Activated T-helper 2 cell treated with anti-CD3 and anti-CD28 coated beads, Interferon-gamma antibody, Interleukin-2, Interleukin-4, amounts not matched to agents 10 μg/mL and 5 μg/mL and 100 μg/mL, durations not matched to agents 14 hours and 24 hours and 36 hours (primary cell): ENCODE measurements at regions of chr2 and their contacts with region 1.

Region 1: GRCh38 chr2:42494355-42495233 is 812 bp upstream of the KCNG3 start:
- DNase-seq: peak; percentile 70
- H3K4me3 Mint-ChIP-seq: peak overlapping the region; percentile 89
- H3K27ac Mint-ChIP-seq: peak overlapping the region; percentile 72
- H3K4me1 Mint-ChIP-seq: peaks cover 8% of the 10 kb centered on the region
- H3K27me3 Mint-ChIP-seq: peaks cover 34% of the 10 kb centered on the region

Region 2: DNA sequence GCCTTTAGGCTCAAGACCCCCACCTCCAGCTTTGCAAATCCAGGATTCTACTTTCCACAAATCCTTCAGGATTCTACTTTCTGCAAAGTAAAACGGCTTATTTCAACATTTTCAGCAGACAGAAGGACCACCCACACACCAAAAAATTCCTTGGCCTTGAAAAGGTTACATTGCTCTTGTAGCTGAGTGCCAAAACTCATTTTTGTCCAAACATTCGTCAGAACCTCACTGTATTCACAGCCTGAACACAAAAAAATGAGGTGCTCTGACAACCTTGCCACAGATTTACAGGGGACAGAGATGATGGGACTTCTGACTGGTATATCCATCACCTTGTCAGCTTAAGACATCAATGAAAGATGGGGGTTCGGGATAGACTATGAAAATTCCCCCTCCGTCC is 70.6 kb before region 1 on chr2:
- intact Hi-C with region 1: loop called (anchors 1 kb)
- DNase-seq: no peak
- H3K4me3 Mint-ChIP-seq: no peak overlapping the region
- H3K27ac Mint-ChIP-seq: no peak overlapping the region
- H3K4me1 Mint-ChIP-seq: peaks cover 28% of the 10 kb centered on the region
- H3K27me3 Mint-ChIP-seq: peaks cover 1% of the 10 kb centered on the region

Region 3: DNA sequence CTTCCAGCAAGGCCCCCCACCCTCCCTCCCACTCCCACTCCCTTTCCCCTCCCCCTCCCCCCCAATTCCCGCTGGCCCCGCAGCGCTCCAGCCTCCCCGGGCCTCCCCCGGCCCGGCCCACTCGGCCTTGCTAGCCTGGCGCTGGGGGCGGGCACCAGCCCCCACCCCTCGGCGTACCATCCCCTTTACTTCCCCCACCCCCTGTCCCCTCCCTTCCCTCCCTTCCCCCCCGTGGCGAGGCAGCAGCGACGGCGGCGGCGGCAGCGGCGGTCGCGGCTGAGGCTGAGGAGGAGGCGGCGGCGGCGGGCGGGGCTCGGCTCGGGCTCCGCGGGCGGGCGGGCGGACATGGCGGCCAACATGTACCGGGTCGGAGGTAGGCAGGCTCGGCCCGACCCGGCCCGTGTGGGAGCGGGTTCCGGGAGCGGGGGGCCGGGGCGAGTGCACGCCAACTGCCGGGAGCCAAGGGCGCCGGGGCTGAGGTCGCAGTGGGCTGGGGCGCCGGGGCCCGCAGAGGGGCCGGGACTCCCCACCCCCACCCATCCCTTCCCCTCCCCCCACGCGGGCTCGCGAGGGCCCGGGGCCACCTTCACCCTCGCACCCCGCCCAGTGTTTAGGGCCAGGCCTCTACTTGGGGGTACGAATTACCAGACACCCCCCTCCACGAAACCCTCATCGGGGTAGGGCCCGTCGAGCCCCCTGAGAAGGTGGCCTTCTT is 74.0 kb after region 1 on chr2 and contains the start of gene MTA3:
- intact Hi-C with region 1: loop called (anchors 2 kb)
- DNase-seq: peak; percentile 61
- H3K4me3 Mint-ChIP-seq: peak within 1 kb of the TSS; percentile 98
- H3K27ac Mint-ChIP-seq: peak within 1 kb of the TSS; percentile 98
- H3K4me1 Mint-ChIP-seq: peaks cover 22% of the 10 kb centered on the region
- H3K27me3 Mint-ChIP-seq: no peaks in the 10 kb centered on the region
- total RNA-seq, gene MTA3: 39.7 and 39.8 TPM in 2 replicates

Region 4: GRCh38 chr2:42663106-42663780 is 168.6 kb after region 1 on chr2:
- intact Hi-C with region 1: loop called (anchors 1 kb)
- DNase-seq: peak; percentile 39
- H3K4me3 Mint-ChIP-seq: no peak overlapping the region
- H3K27ac Mint-ChIP-seq: no peak overlapping the region
- H3K4me1 Mint-ChIP-seq: peaks cover 14% of the 10 kb centered on the region
- H3K27me3 Mint-ChIP-seq: no peaks in the 10 kb centered on the region

Region 5: GRCh38 chr2:42810121-42810970 is 315.8 kb after region 1 on chr2:
- intact Hi-C with region 1: loop called (anchors 1 kb)
- DNase-seq: peak; percentile 94
- H3K4me3 Mint-ChIP-seq: peak overlapping the region; percentile 95
- H3K27ac Mint-ChIP-seq: peak overlapping the region; percentile 100
- H3K4me1 Mint-ChIP-seq: peaks cover 21% of the 10 kb centered on the region
- H3K27me3 Mint-ChIP-seq: no peaks in the 10 kb centered on the region